Naive thymus-derived CD8-positive, alpha-beta T cell (primary cell): ENCODE measurements at regions of chr19 and their contacts with region 1.

Region 1: GRCh38 chr19:12294249-12295158 is at the start of gene ZNF44:
- DNase-seq: peak; percentile 82 to 98 (median 95)
- ATAC-seq: peak; percentile 94 to 98
- H3K4me3 Mint-ChIP-seq: peak within 1 kb of the TSS; percentile 91 to 100 (median 98)
- H3K27ac Mint-ChIP-seq: peak within 1 kb of the TSS; percentile 91 to 99 (median 98)
- H3K4me1 Mint-ChIP-seq: peaks cover 20 to 44% (median 40%) of the 10 kb centered on the region in 4 donors
- H3K27me3 Mint-ChIP-seq: no peaks in the 10 kb centered on the region
- polyA plus RNA-seq, gene ZNF44: 15.4 to 23.4 (median 20.9) TPM

Region 2: DNA sequence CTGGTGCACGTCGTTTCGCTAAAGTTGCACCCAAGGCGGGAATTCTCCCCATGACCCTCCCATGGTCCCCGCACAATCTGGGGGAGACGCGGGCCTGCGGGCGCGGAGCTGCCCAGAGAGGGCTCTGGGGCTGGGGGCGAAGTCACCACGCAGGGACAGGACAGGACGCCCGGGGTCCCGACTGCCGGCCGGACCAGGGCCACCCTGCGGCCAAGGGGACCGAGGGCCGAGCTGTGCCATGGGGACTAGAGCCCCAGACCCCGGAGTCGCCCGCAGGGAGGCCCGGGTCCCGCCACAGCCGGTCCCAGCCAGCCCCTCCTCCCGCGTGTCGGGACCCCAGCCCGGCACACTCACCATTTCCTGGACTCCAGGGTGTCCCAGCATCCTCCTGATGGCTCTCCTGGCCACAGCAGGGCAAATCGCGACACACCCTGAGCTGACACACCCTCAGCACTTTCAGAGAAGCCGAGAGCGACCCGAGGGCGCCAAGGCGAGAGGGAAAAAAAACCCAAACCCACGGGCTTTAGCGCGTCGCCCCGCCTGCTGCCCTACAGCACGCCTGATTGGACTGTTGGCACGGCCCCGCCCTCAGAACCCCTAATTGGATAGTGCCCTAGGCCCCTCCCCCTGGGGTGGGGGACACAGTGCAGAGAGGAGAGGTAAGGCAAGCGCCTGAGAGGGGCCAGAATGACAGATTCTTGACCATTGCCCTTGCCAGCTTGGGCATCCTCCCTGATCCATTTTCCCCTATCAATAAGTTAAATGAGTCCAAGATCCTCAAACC is 28.4 kb before region 1 on chr19:
- POLR2A ChIA-PET with region 1: no interaction called
- DNase-seq: no peak
- ATAC-seq: no peak
- H3K4me3 Mint-ChIP-seq: no peak overlapping the region
- H3K27ac Mint-ChIP-seq: no peak overlapping the region
- H3K4me1 Mint-ChIP-seq: peaks cover 0 to 2% (median 0%) of the 10 kb centered on the region in 4 donors
- H3K27me3 Mint-ChIP-seq: no peaks in the 10 kb centered on the region

Region 3: DNA sequence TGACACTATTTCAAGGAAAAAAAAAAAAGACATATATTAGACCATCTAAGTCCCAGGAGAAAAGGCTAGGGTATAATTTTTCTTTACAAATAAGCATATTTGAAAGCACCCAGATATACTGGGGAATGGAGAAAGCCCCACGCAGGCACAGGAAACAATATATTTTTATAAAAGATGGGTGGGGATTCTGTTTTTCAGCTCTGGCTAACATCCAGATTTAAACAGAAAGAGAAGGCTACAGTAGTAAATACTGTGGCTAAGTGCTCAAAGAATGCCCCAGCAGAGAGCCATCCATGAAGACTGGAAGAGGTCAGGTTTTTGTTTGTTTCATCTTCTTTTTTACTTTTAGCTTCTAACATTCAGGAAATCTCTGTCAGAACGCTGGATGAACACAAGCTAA is 15.8 kb before region 1 on chr19:
- POLR2A ChIA-PET with region 1: interaction called, 18 read pairs
- DNase-seq: peak in 1 of 10 donors; percentile 27
- ATAC-seq: peak; percentile 50 to 80
- H3K4me3 Mint-ChIP-seq: peak overlapping the region in 9 of 10 donors; percentile 12 to 73 (median 55)
- H3K27ac Mint-ChIP-seq: peak overlapping the region in 9 of 10 donors; percentile 16 to 93 (median 61)
- H3K4me1 Mint-ChIP-seq: peaks cover 10 to 59% (median 46%) of the 10 kb centered on the region in 4 donors
- H3K27me3 Mint-ChIP-seq: no peaks in the 10 kb centered on the region

Region 4: DNA sequence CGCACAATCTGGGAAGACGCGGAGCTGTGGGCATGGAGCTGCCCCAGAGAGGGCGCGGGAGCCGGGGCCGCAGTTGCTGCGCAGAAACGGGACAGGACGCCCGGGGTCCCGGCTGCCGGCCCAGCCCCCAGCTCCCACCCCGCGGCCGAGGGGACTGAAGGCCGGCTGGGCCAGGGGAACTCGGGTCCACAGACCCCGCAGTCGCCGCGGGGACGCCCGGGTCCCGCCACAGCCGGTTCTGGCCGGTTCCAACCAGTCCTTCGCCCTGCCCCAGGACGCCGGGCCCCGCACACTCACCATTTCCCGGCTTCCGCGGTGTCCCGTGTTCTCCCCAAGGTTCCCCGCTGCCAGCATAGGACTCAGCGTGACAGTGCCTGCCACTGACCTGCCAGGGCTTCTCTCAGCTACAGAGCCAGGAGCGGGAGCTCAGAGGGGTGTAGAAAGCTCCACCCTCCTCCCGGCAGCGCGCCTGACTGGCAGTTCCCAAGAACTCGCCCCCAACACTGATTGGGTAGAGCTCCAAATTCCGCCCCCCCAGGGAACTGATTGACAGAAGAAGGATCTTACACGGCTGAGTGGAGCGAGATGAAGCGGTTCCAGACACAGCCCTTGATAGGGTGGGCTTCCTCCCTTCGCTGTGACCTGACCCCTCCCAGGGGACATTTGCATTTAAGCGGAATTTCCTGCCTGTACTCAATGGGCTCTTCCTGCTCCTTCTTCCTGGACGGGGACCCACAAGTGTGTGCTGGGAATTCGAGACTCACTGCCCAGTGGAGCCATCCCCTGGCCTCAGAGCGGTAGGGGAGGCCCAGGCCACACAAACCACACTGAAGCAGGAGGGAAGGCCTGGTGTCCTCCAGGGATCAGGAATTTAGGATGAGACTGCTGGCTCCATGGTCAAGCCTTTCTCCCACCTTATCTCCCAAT is 71.0 kb after region 1 on chr19 and contains the start of gene ZNF442:
- POLR2A ChIA-PET with region 1: interaction called, 13 read pairs
- DNase-seq: peak; percentile 70 to 95 (median 84)
- ATAC-seq: peak; percentile 97 to 99
- H3K4me3 Mint-ChIP-seq: peak within 1 kb of the TSS; percentile 93 to 99 (median 97)
- H3K27ac Mint-ChIP-seq: peak within 1 kb of the TSS; percentile 77 to 97 (median 94)
- H3K4me1 Mint-ChIP-seq: peaks cover 5 to 37% (median 23%) of the 10 kb centered on the region in 4 donors
- H3K27me3 Mint-ChIP-seq: no peaks in the 10 kb centered on the region
- polyA plus RNA-seq, gene ZNF442: 0.88 to 2.6 (median 1.7) TPM